Posterior vena cava (tissue), 2 donors: ENCODE measurements at regions of chr6 and their contacts with region 1.

Region 1: DNA sequence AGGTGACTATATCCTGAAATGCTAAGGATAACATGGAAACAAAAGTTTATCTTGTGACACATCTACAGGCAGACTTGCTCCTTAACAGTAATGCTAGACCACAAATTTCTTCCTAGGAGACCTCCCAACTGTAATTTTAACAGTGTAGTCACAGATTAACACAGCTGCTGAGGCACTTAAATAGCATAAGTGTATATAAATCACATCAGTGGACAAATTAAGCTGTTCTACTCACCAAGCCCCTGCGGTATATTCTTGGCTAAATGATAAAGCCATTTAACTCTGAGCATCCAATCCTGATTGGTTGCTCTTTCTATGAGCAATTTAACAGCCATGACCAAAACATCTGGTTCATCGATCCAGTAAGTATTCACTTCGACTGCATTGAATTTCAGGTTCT is 73.3 kb upstream of the LYRM2 start:
- DNase-seq: no peak

Region 2: GRCh38 chr6:89494131-89494796 is 217.5 kb before region 1 on chr6:
- intact Hi-C with region 1: no loop called
- DNase-seq: no peak

Region 3: DNA sequence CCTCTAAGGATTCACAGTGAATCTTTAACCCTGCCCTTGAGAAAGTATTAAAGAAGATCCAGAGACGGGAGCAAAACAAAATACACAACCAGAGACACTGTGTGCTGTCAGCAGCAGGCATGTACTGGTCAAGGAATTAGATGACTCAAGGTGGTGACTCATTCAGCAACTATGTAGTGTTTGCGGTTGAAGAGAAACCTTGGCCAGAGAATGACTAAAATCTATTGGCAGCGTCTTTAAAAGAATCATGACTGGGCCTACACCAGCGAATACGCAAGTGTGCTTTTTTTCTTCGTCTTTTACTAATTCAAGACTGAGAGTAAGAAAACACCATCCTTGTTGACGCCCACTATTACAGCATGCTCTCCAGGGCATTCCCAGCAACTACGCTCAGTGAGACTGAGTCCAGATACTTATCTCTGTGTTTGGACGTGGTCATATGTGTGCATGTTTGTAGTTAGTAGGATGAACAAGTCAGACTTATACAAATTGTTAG is 657.3 kb after region 1 on chr6:
- intact Hi-C with region 1: loop called in 1 of 2 experiments (anchors 10 kb)
- DNase-seq: peak; percentile 82